Esophagus muscularis mucosa (tissue), 4 donors: ENCODE measurements at regions of chr11 and their contacts with region 1.

Region 1: GRCh38 chr11:59822989-59823566 is 12.5 kb upstream of the MRPL16 start:
- DNase-seq: no peak
- H3K4me3 ChIP-seq: no peak overlapping the region
- H3K27ac ChIP-seq: no peak overlapping the region
- H3K4me1 ChIP-seq: peaks cover 0 to 9% (median 4%) of the 10 kb centered on the region in 4 donors
- H3K27me3 ChIP-seq: no peaks in the 10 kb centered on the region
- CTCF ChIP-seq: peak; percentile 56 to 64 (median 62)
- EP300 ChIP-seq: no peak
- POLR2A ChIP-seq: no peak

Region 2: DNA sequence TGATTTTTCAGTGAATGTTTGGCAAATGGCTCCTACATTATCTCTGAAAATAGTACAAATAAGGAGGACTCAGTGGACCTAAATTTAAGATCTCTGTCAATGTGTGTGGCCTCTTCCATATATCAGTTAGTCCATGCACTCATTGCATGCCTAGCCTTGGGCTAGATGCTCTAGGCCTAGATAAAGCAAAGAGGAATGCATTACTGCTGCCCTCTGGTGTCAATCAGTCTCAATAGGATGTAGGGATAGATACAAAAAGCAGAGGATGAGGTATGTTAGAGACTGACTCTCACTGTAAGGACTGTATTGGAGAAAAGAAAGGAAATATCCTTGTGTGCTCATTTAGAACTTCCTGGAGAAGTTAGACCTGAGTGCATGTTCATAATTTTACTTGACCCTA is 307.4 kb after region 1 on chr11:
- intact Hi-C with region 1: loop called (anchors 5 kb)
- DNase-seq: no peak
- H3K4me3 ChIP-seq: no peak overlapping the region
- H3K27ac ChIP-seq: no peak overlapping the region
- H3K4me1 ChIP-seq: no peaks in the 10 kb centered on the region
- H3K27me3 ChIP-seq: no peaks in the 10 kb centered on the region
- CTCF ChIP-seq: peak; percentile 26 to 40 (median 32)
- EP300 ChIP-seq: no peak
- POLR2A ChIP-seq: no peak

Region 3: GRCh38 chr11:60193687-60194433 is 370.8 kb after region 1 on chr11:
- intact Hi-C with region 1: loop called (anchors 10 kb)
- DNase-seq: no peak
- H3K4me3 ChIP-seq: no peak overlapping the region
- H3K27ac ChIP-seq: no peak overlapping the region
- H3K4me1 ChIP-seq: no peaks in the 10 kb centered on the region
- H3K27me3 ChIP-seq: no peaks in the 10 kb centered on the region
- CTCF ChIP-seq: peak; percentile 69 to 89 (median 77)
- EP300 ChIP-seq: no peak
- POLR2A ChIP-seq: no peak